T-cell (primary cell): ENCODE measurements at regions of chr1 and their contacts with region 1.

Region 1: DNA sequence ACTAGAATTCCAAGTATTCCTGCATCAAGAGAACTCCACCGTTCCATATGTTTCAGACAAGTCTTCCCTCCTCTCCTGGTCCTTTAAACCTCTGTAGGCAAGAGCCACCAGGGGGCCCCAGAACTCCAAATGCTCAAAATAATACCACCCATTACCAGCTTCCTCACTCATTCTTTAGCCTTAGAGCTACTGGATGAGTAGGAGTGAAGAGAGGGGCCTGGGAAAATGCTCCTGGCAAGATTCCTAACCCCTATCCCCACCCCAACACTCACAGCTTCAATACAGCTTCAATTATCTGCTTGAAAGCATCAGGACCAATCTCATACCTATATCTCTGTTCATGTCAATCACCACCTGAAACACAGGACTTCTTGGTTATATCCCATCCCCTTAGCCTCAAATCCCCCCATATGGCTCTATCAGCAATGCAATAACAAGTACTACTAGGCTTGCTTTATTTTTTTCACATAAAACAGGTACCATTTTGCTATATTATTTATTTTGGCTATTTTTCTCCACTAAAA is 9.7 kb downstream of the TOR1AIP2 start:
- DNase-seq: peak in 34 of 35 experiments; percentile 12 to 69 (median 43)
- ATAC-seq: peak; percentile 73 to 80 (median 76)
- H3K4me3 ChIP-seq: no peak overlapping the region
- H3K4me3 Mint-ChIP-seq: no peak overlapping the region
- H3K27ac ChIP-seq: no peak overlapping the region
- H3K27ac Mint-ChIP-seq: peak overlapping the region in 1 of 2 donors; percentile 8
- H3K4me1 ChIP-seq: peaks cover 0 to 3% of the 10 kb centered on the region in 2 experiments
- H3K4me1 Mint-ChIP-seq: peaks cover 16 to 30% (median 25%) of the 10 kb centered on the region in 3 donors
- H3K27me3 ChIP-seq: no peaks in the 10 kb centered on the region
- H3K27me3 Mint-ChIP-seq: no peaks in the 10 kb centered on the region

Region 2: GRCh38 chr1:179310721-179311120 is 557.1 kb before region 1 on chr1:
- CTCF ChIA-PET with region 1: no interaction called
- POLR2A ChIA-PET with region 1: no interaction called
- DNase-seq: no peak
- ATAC-seq: no peak
- H3K4me3 ChIP-seq: no peak overlapping the region
- H3K4me3 Mint-ChIP-seq: no peak overlapping the region
- H3K27ac ChIP-seq: no peak overlapping the region
- H3K27ac Mint-ChIP-seq: no peak overlapping the region
- H3K4me1 ChIP-seq: peaks cover 0 to 3% of the 10 kb centered on the region in 2 experiments
- H3K4me1 Mint-ChIP-seq: peaks cover 45 to 46% (median 45%) of the 10 kb centered on the region in 3 donors
- H3K27me3 ChIP-seq: no peaks in the 10 kb centered on the region
- H3K27me3 Mint-ChIP-seq: no peaks in the 10 kb centered on the region

Region 3: GRCh38 chr1:179882243-179883039 is 14.6 kb after region 1 on chr1 and contains the start of gene TOR1AIP1:
- CTCF ChIA-PET with region 1: interaction called, 3 to 14 read pairs
- POLR2A ChIA-PET with region 1: interaction called, 3 to 12 read pairs
- DNase-seq: peak; percentile 93 to 99 (median 97)
- ATAC-seq: peak; percentile 79 to 84 (median 80)
- H3K4me3 ChIP-seq: peak within 1 kb of the TSS; percentile 92 to 96
- H3K4me3 Mint-ChIP-seq: peak within 1 kb of the TSS; percentile 93 to 99 (median 95)
- H3K27ac ChIP-seq: peak within 1 kb of the TSS; percentile 96
- H3K27ac Mint-ChIP-seq: peak within 1 kb of the TSS; percentile 100
- H3K4me1 ChIP-seq: peaks cover 18 to 26% of the 10 kb centered on the region in 2 experiments
- H3K4me1 Mint-ChIP-seq: peaks cover 60 to 72% (median 69%) of the 10 kb centered on the region in 3 donors
- H3K27me3 ChIP-seq: no peaks in the 10 kb centered on the region
- H3K27me3 Mint-ChIP-seq: no peaks in the 10 kb centered on the region
- total RNA-seq, gene TOR1AIP1: 41.1 to 60.3 (median 44.7) TPM

Region 4: GRCh38 chr1:179976970-179977651 is 109.2 kb after region 1 on chr1:
- CTCF ChIA-PET with region 1: no interaction called
- POLR2A ChIA-PET with region 1: no interaction called
- DNase-seq: no peak
- ATAC-seq: no peak
- H3K4me3 ChIP-seq: no peak overlapping the region
- H3K4me3 Mint-ChIP-seq: no peak overlapping the region
- H3K27ac ChIP-seq: no peak overlapping the region
- H3K27ac Mint-ChIP-seq: peak overlapping the region; percentile 34 to 59
- H3K4me1 ChIP-seq: peaks cover 2 to 4% of the 10 kb centered on the region in 2 experiments
- H3K4me1 Mint-ChIP-seq: peaks cover 70 to 77% (median 77%) of the 10 kb centered on the region in 3 donors
- H3K27me3 ChIP-seq: no peaks in the 10 kb centered on the region
- H3K27me3 Mint-ChIP-seq: no peaks in the 10 kb centered on the region

Region 5: DNA sequence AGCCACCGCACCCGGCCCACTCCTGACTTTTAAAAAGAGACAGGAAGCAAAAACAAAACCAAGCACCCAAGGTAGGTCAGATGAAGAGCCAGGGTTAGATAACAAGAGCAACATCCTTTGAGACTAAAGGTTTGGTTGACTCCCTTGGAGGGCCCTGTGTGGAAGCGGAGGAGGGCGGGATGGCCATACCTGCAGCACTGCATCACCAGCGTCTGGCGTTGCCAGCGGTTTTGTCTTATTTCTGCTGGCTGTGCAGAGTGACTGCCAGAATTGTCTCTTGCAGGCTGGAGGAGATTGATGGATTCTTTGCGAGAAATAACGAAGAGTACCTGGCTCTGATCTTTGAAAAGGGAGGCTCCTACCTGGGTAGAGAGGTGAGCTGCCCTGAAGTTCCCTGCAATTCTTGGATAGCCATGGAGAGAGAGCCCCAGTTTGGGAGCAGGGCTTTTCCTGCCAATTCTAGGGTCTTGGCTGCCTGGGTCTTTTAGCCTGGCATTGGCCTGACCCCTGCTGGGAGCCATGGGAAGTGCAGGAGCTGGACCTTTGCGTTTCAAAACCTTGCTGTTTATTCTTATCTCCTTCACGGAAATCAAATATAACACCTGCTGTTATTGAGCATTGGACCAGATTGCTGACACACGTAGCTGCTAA is 310.8 kb after region 1 on chr1:
- CTCF ChIA-PET with region 1: interaction called, 9 to 28 read pairs
- POLR2A ChIA-PET with region 1: no interaction called
- DNase-seq: peak in 31 of 35 experiments; percentile 15 to 75 (median 57)
- ATAC-seq: peak; percentile 60 to 75 (median 67)
- H3K4me3 ChIP-seq: no peak overlapping the region
- H3K4me3 Mint-ChIP-seq: no peak overlapping the region
- H3K27ac ChIP-seq: no peak overlapping the region
- H3K27ac Mint-ChIP-seq: peak overlapping the region in 1 of 2 donors; percentile 64
- H3K4me1 ChIP-seq: no peaks in the 10 kb centered on the region
- H3K4me1 Mint-ChIP-seq: no peaks in the 10 kb centered on the region
- H3K27me3 ChIP-seq: no peaks in the 10 kb centered on the region
- H3K27me3 Mint-ChIP-seq: no peaks in the 10 kb centered on the region